ENCODE measurements at regions of chr1 and their contacts with region 1.

Region 1: GRCh38 chr1:160607011-160607671 is 27.8 kb upstream of the CD84 start:
- DNase-seq: peak in 8 of 9 experiments; percentile 35 to 91 (median 62)
- ATAC-seq: peak; percentile 99
- H3K4me3 ChIP-seq: no peak overlapping the region
- H3K4me3 Mint-ChIP-seq: peak overlapping the region; percentile 27
- H3K27ac ChIP-seq: peak overlapping the region in 1 of 2 experiments; percentile 35
- H3K27ac Mint-ChIP-seq: peak overlapping the region; percentile 88
- H3K4me1 ChIP-seq: peaks cover 14% of the 10 kb centered on the region
- H3K4me1 Mint-ChIP-seq: peaks cover 41% of the 10 kb centered on the region
- H3K27me3 ChIP-seq: no peaks in the 10 kb centered on the region
- H3K27me3 Mint-ChIP-seq: no peaks in the 10 kb centered on the region
- CTCF ChIP-seq: peak; percentile 84

Region 2: GRCh38 chr1:160031365-160032164 is 575.6 kb before region 1 on chr1 and contains the start of gene PIGM:
- CTCF ChIA-PET with region 1: no interaction called
- POLR2A ChIA-PET with region 1: no interaction called
- intact Hi-C with region 1: no loop called
- DNase-seq: peak; percentile 78 to 96 (median 94)
- ATAC-seq: peak; percentile 98
- H3K4me3 ChIP-seq: peak within 1 kb of the TSS; percentile 68 to 90
- H3K4me3 Mint-ChIP-seq: peak within 1 kb of the TSS; percentile 98
- H3K27ac ChIP-seq: peak within 1 kb of the TSS; percentile 58
- H3K27ac Mint-ChIP-seq: peak within 1 kb of the TSS; percentile 93
- H3K4me1 ChIP-seq: peaks cover 23% of the 10 kb centered on the region
- H3K4me1 Mint-ChIP-seq: peaks cover 40% of the 10 kb centered on the region
- H3K27me3 ChIP-seq: no peaks in the 10 kb centered on the region
- H3K27me3 Mint-ChIP-seq: no peaks in the 10 kb centered on the region
- CTCF ChIP-seq: no peak
- total RNA-seq, gene PIGM: 1.4 to 1.6 TPM

Region 3: GRCh38 chr1:160193091-160193819 is 413.9 kb before region 1 on chr1:
- CTCF ChIA-PET with region 1: no interaction called
- POLR2A ChIA-PET with region 1: no interaction called
- intact Hi-C with region 1: loop called in 1 of 2 experiments (anchors 5 kb)
- DNase-seq: peak; percentile 58 to 89 (median 81)
- ATAC-seq: peak; percentile 95
- H3K4me3 ChIP-seq: no peak overlapping the region
- H3K4me3 Mint-ChIP-seq: no peak overlapping the region
- H3K27ac ChIP-seq: no peak overlapping the region
- H3K27ac Mint-ChIP-seq: no peak overlapping the region
- H3K4me1 ChIP-seq: no peaks in the 10 kb centered on the region
- H3K4me1 Mint-ChIP-seq: no peaks in the 10 kb centered on the region
- H3K27me3 ChIP-seq: peaks cover 0 to 2% of the 10 kb centered on the region in 2 experiments
- H3K27me3 Mint-ChIP-seq: no peaks in the 10 kb centered on the region
- CTCF ChIP-seq: peak; percentile 83

Region 4: DNA sequence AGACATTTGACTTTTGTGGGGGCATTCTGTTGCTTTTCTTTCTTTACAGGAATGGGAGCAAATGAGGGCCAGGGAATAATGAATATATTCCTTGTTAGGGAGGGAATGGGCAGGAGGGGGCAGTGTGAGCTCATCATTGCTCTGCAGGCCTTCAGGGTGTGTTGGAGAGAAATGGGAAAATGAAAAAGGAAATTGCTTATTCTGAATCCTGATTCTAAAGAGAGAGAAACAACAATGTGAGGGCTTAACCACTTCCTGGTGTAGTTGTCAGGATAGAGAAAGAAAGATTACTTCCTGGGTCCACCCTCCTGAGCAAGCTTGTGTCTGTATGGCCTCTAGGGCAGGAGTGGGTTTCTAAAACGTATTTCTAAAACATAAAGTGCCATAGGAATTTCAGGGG is 178.5 kb before region 1 on chr1:
- CTCF ChIA-PET with region 1: interaction called, 114 read pairs
- POLR2A ChIA-PET with region 1: interaction called, 6 read pairs
- intact Hi-C with region 1: loop called (anchors 1 kb)
- DNase-seq: peak in 6 of 9 experiments; percentile 24 to 73 (median 54)
- ATAC-seq: peak; percentile 54
- H3K4me3 ChIP-seq: peak overlapping the region in 1 of 2 experiments; percentile 20
- H3K4me3 Mint-ChIP-seq: peak overlapping the region; percentile 55
- H3K27ac ChIP-seq: peak overlapping the region; percentile 50 to 86
- H3K27ac Mint-ChIP-seq: peak overlapping the region; percentile 86
- H3K4me1 ChIP-seq: peaks cover 63% of the 10 kb centered on the region
- H3K4me1 Mint-ChIP-seq: peaks cover 62% of the 10 kb centered on the region
- H3K27me3 ChIP-seq: no peaks in the 10 kb centered on the region
- H3K27me3 Mint-ChIP-seq: no peaks in the 10 kb centered on the region
- CTCF ChIP-seq: peak; percentile 41

Region 5: GRCh38 chr1:160494620-160495019 is 112.5 kb before region 1 on chr1:
- CTCF ChIA-PET with region 1: interaction called, 10 read pairs
- POLR2A ChIA-PET with region 1: no interaction called
- intact Hi-C with region 1: loop called in 1 of 2 experiments (anchors 5 kb)
- DNase-seq: peak in 2 of 9 experiments; percentile 29 to 31
- ATAC-seq: no peak
- H3K4me3 ChIP-seq: no peak overlapping the region
- H3K4me3 Mint-ChIP-seq: no peak overlapping the region
- H3K27ac ChIP-seq: no peak overlapping the region
- H3K27ac Mint-ChIP-seq: no peak overlapping the region
- H3K4me1 ChIP-seq: no peaks in the 10 kb centered on the region
- H3K4me1 Mint-ChIP-seq: peaks cover 36% of the 10 kb centered on the region
- H3K27me3 ChIP-seq: no peaks in the 10 kb centered on the region
- H3K27me3 Mint-ChIP-seq: no peaks in the 10 kb centered on the region
- CTCF ChIP-seq: no peak

Region 6: GRCh38 chr1:160550572-160551034 is 56.5 kb before region 1 on chr1:
- CTCF ChIA-PET with region 1: interaction called, 232 read pairs
- POLR2A ChIA-PET with region 1: no interaction called
- intact Hi-C with region 1: loop called (anchors 1 kb)
- DNase-seq: peak; percentile 25 to 80 (median 67)
- ATAC-seq: peak; percentile 78
- H3K4me3 ChIP-seq: no peak overlapping the region
- H3K4me3 Mint-ChIP-seq: no peak overlapping the region
- H3K27ac ChIP-seq: peak overlapping the region in 1 of 2 experiments; percentile 13
- H3K27ac Mint-ChIP-seq: peak overlapping the region; percentile 13
- H3K4me1 ChIP-seq: no peaks in the 10 kb centered on the region
- H3K4me1 Mint-ChIP-seq: peaks cover 32% of the 10 kb centered on the region
- H3K27me3 ChIP-seq: no peaks in the 10 kb centered on the region
- H3K27me3 Mint-ChIP-seq: no peaks in the 10 kb centered on the region
- CTCF ChIP-seq: peak; percentile 51

Region 7: GRCh38 chr1:160590488-160590887 is 16.7 kb before region 1 on chr1:
- CTCF ChIA-PET with region 1: interaction called, 17 read pairs
- POLR2A ChIA-PET with region 1: interaction called, 4 read pairs
- intact Hi-C with region 1: no loop called
- DNase-seq: no peak
- ATAC-seq: no peak
- H3K4me3 ChIP-seq: no peak overlapping the region
- H3K4me3 Mint-ChIP-seq: no peak overlapping the region
- H3K27ac ChIP-seq: no peak overlapping the region
- H3K27ac Mint-ChIP-seq: no peak overlapping the region
- H3K4me1 ChIP-seq: peaks cover 4% of the 10 kb centered on the region
- H3K4me1 Mint-ChIP-seq: peaks cover 13% of the 10 kb centered on the region
- H3K27me3 ChIP-seq: no peaks in the 10 kb centered on the region
- H3K27me3 Mint-ChIP-seq: no peaks in the 10 kb centered on the region
- CTCF ChIP-seq: no peak

Region 8: GRCh38 chr1:160646711-160647328 is 39.7 kb after region 1 on chr1 and contains the start of gene SLAMF1:
- CTCF ChIA-PET with region 1: interaction called, 10 read pairs
- POLR2A ChIA-PET with region 1: interaction called, 3 read pairs
- intact Hi-C with region 1: no loop called
- DNase-seq: peak in 5 of 9 experiments; percentile 34 to 71 (median 52)
- ATAC-seq: peak; percentile 74
- H3K4me3 ChIP-seq: peak within 1 kb of the TSS; percentile 51 to 60
- H3K4me3 Mint-ChIP-seq: peak within 1 kb of the TSS; percentile 87
- H3K27ac ChIP-seq: peak within 1 kb of the TSS; percentile 57 to 58
- H3K27ac Mint-ChIP-seq: peak within 1 kb of the TSS; percentile 88
- H3K4me1 ChIP-seq: peaks cover 73% of the 10 kb centered on the region
- H3K4me1 Mint-ChIP-seq: peaks cover 89% of the 10 kb centered on the region
- H3K27me3 ChIP-seq: no peaks in the 10 kb centered on the region
- H3K27me3 Mint-ChIP-seq: no peaks in the 10 kb centered on the region
- CTCF ChIP-seq: no peak
- total RNA-seq, gene SLAMF1: 12.8 to 18.6 TPM

Region 9: GRCh38 chr1:161099090-161099802 is 492.1 kb after region 1 on chr1:
- CTCF ChIA-PET with region 1: no interaction called
- POLR2A ChIA-PET with region 1: no interaction called
- intact Hi-C with region 1: no loop called
- DNase-seq: no peak
- ATAC-seq: no peak
- H3K4me3 ChIP-seq: no peak overlapping the region
- H3K4me3 Mint-ChIP-seq: peak overlapping the region; percentile 74
- H3K27ac ChIP-seq: no peak overlapping the region
- H3K27ac Mint-ChIP-seq: no peak overlapping the region
- H3K4me1 ChIP-seq: peaks cover 14% of the 10 kb centered on the region
- H3K4me1 Mint-ChIP-seq: peaks cover 27% of the 10 kb centered on the region
- H3K27me3 ChIP-seq: no peaks in the 10 kb centered on the region
- H3K27me3 Mint-ChIP-seq: no peaks in the 10 kb centered on the region
- CTCF ChIP-seq: no peak

Measured in CD8-positive, alpha-beta T cell (primary cell).